Caco-2 (cell line): ENCODE measurements at regions of chr14 and their contacts with region 1.

Region 1: DNA sequence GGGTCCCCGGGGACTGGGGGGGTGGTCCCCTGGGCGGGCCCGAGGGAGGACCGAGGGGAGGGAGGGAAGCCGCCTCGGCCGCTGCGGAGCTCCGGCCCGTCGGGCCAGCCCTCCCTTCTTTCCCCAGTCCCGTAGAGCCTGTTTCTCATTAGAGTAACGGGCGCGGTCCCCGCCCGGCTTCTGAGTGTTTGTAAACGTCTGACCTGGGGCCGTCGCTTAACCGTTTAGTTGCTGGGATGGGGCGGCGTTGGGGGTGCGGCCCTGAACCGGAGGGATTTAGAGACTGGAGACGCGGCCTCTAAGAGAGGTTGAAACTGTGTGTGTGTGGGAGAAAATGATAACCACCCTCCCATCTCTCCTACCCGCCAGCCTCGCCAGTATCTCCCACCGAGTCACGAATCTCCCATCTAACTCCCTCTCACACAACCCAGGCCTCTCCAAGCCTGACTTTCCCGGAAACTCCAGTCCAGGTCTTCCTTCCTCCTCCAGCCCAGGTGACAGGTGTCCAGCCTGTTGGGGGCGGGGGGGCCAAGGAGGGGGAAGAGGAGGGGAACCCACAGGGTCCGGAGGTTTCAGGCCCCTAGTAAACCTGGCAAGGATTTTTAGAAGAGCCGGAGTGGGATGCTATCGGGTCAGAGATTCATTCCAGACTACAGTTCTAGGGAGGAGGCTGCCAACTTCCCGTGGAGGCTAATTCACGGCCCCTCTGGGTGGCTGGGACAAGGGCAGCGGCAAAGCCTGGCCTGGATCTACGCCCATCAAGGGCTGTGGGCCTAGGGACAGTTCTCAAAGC is 1.1 kb upstream of the NFATC4 start:
- DNase-seq: peak; percentile 94 to 96
- H3K4me3 ChIP-seq: peak overlapping the region; percentile 67
- H3K4me3 Mint-ChIP-seq: peak overlapping the region; percentile 85
- H3K27ac Mint-ChIP-seq: peak overlapping the region; percentile 71
- H3K4me1 ChIP-seq: peaks cover 4% of the 10 kb centered on the region; the same call in 1 of the 2 replicates
- H3K4me1 Mint-ChIP-seq: peaks cover 13% of the 10 kb centered on the region
- H3K27me3 ChIP-seq: no peaks in the 10 kb centered on the region
- H3K27me3 Mint-ChIP-seq: no peaks in the 10 kb centered on the region
- CTCF ChIP-seq: no peak

Region 2: GRCh38 chr14:24249230-24250021 is 117.5 kb before region 1 on chr14:
- CTCF ChIA-PET with region 1: no interaction called
- POLR2A ChIA-PET with region 1: no interaction called
- intact Hi-C with region 1: no loop called
- DNase-seq: no peak
- H3K4me3 ChIP-seq: no peak overlapping the region
- H3K4me3 Mint-ChIP-seq: no peak overlapping the region
- H3K27ac Mint-ChIP-seq: no peak overlapping the region
- H3K4me1 ChIP-seq: peaks cover 13% of the 10 kb centered on the region
- H3K4me1 Mint-ChIP-seq: no peaks in the 10 kb centered on the region
- H3K27me3 ChIP-seq: no peaks in the 10 kb centered on the region
- H3K27me3 Mint-ChIP-seq: no peaks in the 10 kb centered on the region
- CTCF ChIP-seq: no peak

Region 3: GRCh38 chr14:24332268-24332993 is 34.5 kb before region 1 on chr14:
- CTCF ChIA-PET with region 1: interaction called, 8 read pairs
- POLR2A ChIA-PET with region 1: no interaction called
- intact Hi-C with region 1: loop called (anchors 2 kb)
- DNase-seq: peak; percentile 76 to 80
- H3K4me3 ChIP-seq: peak overlapping the region; percentile 55
- H3K4me3 Mint-ChIP-seq: peak overlapping the region; percentile 83
- H3K27ac Mint-ChIP-seq: peak overlapping the region; percentile 15
- H3K4me1 ChIP-seq: peaks cover 15% of the 10 kb centered on the region
- H3K4me1 Mint-ChIP-seq: peaks cover 7% of the 10 kb centered on the region
- H3K27me3 ChIP-seq: no peaks in the 10 kb centered on the region
- H3K27me3 Mint-ChIP-seq: no peaks in the 10 kb centered on the region
- CTCF ChIP-seq: peak; percentile 56 to 66

Region 4: GRCh38 chr14:24392325-24393091 is 25.6 kb after region 1 on chr14:
- CTCF ChIA-PET with region 1: no interaction called
- POLR2A ChIA-PET with region 1: no interaction called
- intact Hi-C with region 1: loop called (anchors 2 kb)
- DNase-seq: peak in 1 of 2 experiments; percentile 37
- H3K4me3 ChIP-seq: no peak overlapping the region
- H3K4me3 Mint-ChIP-seq: no peak overlapping the region
- H3K27ac Mint-ChIP-seq: no peak overlapping the region
- H3K4me1 ChIP-seq: peaks cover 5% of the 10 kb centered on the region
- H3K4me1 Mint-ChIP-seq: peaks cover 21% of the 10 kb centered on the region
- H3K27me3 ChIP-seq: no peaks in the 10 kb centered on the region
- H3K27me3 Mint-ChIP-seq: no peaks in the 10 kb centered on the region
- CTCF ChIP-seq: no peak

Region 5: DNA sequence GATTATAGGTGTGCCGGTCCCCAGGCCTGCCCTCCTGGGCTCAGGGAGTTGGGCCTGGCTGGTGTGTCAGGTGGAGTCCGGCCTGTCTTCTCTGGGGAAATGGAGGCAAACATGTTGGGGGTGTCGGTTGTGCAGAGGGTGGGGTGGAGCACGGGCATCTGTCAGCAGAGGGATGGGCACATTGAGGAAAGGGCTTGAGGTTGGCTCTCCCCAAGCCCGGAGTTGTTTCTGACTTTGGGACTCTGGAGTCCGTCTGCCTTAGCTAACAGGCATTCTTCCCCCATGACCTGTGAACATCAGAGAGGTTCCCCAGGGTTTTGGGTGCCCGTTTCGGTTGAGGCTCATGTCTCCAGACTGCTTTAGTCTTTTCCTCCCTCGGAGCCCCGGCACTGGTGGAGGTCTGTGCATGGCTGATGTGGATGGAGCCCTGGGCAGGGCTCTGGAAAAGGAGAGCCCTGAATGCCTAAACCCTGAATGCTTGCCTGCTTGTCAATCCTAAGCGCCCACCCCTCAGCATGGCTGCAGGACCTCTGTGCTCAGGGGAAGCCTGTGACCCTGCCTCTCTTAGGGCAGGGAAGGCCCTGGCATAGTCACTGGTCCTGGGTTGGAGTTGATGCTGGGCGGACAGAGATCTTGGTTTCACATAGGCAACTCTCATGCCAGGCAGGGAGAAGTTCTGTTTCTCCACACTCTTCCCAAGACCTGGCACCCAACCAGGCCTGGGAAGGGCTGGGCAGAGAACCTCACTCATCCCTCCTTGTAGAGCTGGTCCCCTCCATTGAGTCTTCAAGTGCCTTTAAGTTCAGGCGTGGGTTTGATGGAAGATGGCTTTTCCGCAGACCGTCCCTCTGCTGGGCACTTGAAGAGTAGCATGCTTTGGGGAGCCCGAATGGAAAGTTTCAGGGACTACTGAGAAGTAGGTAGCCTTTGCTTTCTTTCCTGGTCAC is 44.8 kb after region 1 on chr14:
- CTCF ChIA-PET with region 1: interaction called, 4 read pairs
- POLR2A ChIA-PET with region 1: no interaction called
- intact Hi-C with region 1: loop called (anchors 1 kb)
- DNase-seq: peak in 1 of 2 experiments; percentile 60
- H3K4me3 ChIP-seq: no peak overlapping the region
- H3K4me3 Mint-ChIP-seq: no peak overlapping the region
- H3K27ac Mint-ChIP-seq: no peak overlapping the region
- H3K4me1 ChIP-seq: no peaks in the 10 kb centered on the region
- H3K4me1 Mint-ChIP-seq: no peaks in the 10 kb centered on the region
- H3K27me3 ChIP-seq: no peaks in the 10 kb centered on the region
- H3K27me3 Mint-ChIP-seq: no peaks in the 10 kb centered on the region
- CTCF ChIP-seq: peak; percentile 71 to 75

Region 6: DNA sequence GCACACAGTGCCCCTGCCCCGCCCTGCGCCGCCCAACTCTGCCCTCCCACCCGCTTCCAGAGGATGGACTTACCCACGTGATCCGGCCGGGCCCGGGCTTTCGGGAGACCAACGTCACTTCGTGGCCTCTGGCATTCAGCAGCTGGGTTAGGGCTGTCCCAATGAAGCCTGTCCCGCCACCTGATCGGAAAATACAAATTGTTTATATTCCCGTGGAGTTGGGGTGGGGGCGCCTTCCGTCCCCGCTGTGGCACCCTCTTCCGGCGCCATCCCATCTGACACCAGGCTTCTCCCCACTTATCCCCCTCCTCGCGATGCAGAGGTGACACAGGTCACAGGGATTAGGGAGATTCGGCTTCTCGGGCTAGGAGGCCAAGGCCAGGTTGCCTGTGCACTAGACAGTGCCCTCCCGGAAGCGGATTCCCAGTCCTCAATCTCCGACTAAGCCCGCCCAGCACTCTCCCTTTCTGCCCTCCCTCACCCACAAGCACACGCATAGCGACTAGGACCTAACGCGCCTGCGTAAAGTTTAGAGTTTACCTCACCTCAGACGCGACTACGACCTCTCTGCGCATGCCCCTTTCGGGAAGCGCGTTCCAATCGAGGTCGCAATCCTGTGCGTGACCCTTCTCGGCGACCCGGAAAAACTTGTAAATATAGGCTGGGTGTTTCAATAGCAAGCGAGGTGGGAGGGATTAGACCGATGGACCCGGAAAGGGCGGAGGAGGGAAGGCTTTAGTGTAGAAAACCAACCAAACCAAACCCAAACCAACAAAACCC is 75.5 kb after region 1 on chr14 and contains the start of gene SDR39U1:
- CTCF ChIA-PET with region 1: interaction called, 22 read pairs
- POLR2A ChIA-PET with region 1: interaction called, 3 read pairs
- intact Hi-C with region 1: no loop called
- DNase-seq: peak; percentile 96 to 98
- H3K4me3 ChIP-seq: peak within 1 kb of the TSS; percentile 76
- H3K4me3 Mint-ChIP-seq: peak within 1 kb of the TSS; percentile 81
- H3K27ac Mint-ChIP-seq: peak within 1 kb of the TSS; percentile 94
- H3K4me1 ChIP-seq: no peaks in the 10 kb centered on the region; the same call in 1 of the 2 replicates
- H3K4me1 Mint-ChIP-seq: peaks cover 8% of the 10 kb centered on the region
- H3K27me3 ChIP-seq: no peaks in the 10 kb centered on the region
- H3K27me3 Mint-ChIP-seq: no peaks in the 10 kb centered on the region
- CTCF ChIP-seq: no peak
- total RNA-seq, gene SDR39U1: 44.1 and 45.8 TPM in 2 replicates